Endothelial cell of umbilical vein (primary cell): ENCODE measurements at regions of chr18 and their contacts with region 1.

Region 1: GRCh38 chr18:67265464-67266245 is 250.9 kb downstream of the DSEL start:
- DNase-seq: peak; percentile 76
- H3K4me3 ChIP-seq: peak overlapping the region in 1 of 3 experiments; percentile 35
- H3K27ac ChIP-seq: peak overlapping the region; percentile 91
- H3K4me1 ChIP-seq: peaks cover 30% of the 10 kb centered on the region
- H3K27me3 ChIP-seq: no peaks in the 10 kb centered on the region
- CTCF ChIP-seq: no peak
- POLR2A ChIP-seq: peak; percentile 47

Region 2: GRCh38 chr18:67243799-67244587 is 21.7 kb before region 1 on chr18:
- CTCF ChIA-PET with region 1: interaction called, 9 read pairs
- POLR2A ChIA-PET with region 1: no interaction called
- dilution Hi-C with region 1: no loop called
- intact Hi-C with region 1: loop called (anchors 1 kb)
- DNase-seq: peak; percentile 53
- H3K4me3 ChIP-seq: peak overlapping the region; percentile 9 to 77 (median 39)
- H3K27ac ChIP-seq: peak overlapping the region; percentile 87
- H3K4me1 ChIP-seq: peaks cover 14% of the 10 kb centered on the region
- H3K27me3 ChIP-seq: no peaks in the 10 kb centered on the region
- CTCF ChIP-seq: no peak
- POLR2A ChIP-seq: no peak

Region 3: GRCh38 chr18:67359873-67360838 is 94.5 kb after region 1 on chr18:
- CTCF ChIA-PET with region 1: no interaction called
- POLR2A ChIA-PET with region 1: no interaction called
- dilution Hi-C with region 1: no loop called
- intact Hi-C with region 1: loop called (anchors 1 kb)
- DNase-seq: peak; percentile 97
- H3K4me3 ChIP-seq: peak overlapping the region; percentile 1 to 64 (median 21)
- H3K27ac ChIP-seq: peak overlapping the region; percentile 78
- H3K4me1 ChIP-seq: peaks cover 16% of the 10 kb centered on the region
- H3K27me3 ChIP-seq: no peaks in the 10 kb centered on the region
- CTCF ChIP-seq: no peak
- POLR2A ChIP-seq: no peak

Region 4: GRCh38 chr18:67553471-67553870 is 287.8 kb after region 1 on chr18:
- CTCF ChIA-PET with region 1: no interaction called
- POLR2A ChIA-PET with region 1: no interaction called
- dilution Hi-C with region 1: no loop called
- intact Hi-C with region 1: no loop called
- DNase-seq: peak; percentile 65
- H3K4me3 ChIP-seq: no peak overlapping the region
- H3K27ac ChIP-seq: no peak overlapping the region
- H3K4me1 ChIP-seq: peaks cover 6% of the 10 kb centered on the region
- H3K27me3 ChIP-seq: no peaks in the 10 kb centered on the region
- CTCF ChIP-seq: no peak
- POLR2A ChIP-seq: no peak